ENCODE measurements at regions of chr20 and their contacts with region 1.

Region 1: DNA sequence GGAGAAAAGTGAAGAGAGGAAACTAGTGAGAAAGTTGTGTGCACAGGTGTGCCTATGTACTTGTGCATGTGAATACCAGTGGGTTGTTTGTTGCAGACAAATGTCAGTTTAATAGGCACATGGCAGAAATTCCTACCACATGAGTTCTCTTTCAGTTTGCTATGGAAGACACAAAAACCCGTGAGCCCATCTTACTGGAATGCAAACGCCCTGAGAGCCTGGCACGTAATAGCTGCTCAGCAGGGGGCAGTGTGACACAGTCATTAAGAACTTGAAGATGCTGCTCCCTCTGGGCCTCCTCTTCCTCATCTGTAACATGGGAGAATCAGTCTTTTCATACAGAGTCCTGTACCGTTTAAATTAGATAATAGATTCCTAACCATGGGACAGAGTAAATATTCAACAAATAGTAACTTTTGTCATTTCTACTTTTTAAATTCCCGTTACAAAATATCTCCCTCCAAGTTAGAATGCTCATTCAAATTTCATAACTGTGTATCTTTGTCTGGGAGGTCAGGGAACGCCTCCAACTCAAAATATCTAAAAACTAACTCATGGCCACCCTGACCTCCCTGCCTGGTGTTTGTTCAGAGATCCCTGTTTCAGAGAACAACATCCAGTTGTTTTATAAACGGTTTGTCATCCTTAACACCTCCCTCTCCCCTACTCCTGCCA is 802.9 kb downstream of the MAFB start:
- DNase-seq: peak; percentile 68 to 80
- ATAC-seq: peak; percentile 79 to 92 (median 88)
- H3K4me3 ChIP-seq: no peak overlapping the region
- H3K27ac ChIP-seq: no peak overlapping the region
- H3K4me1 ChIP-seq: no peaks in the 10 kb centered on the region
- H3K27me3 ChIP-seq: no peaks in the 10 kb centered on the region
- CTCF ChIP-seq: peak; percentile 71

Region 2: DNA sequence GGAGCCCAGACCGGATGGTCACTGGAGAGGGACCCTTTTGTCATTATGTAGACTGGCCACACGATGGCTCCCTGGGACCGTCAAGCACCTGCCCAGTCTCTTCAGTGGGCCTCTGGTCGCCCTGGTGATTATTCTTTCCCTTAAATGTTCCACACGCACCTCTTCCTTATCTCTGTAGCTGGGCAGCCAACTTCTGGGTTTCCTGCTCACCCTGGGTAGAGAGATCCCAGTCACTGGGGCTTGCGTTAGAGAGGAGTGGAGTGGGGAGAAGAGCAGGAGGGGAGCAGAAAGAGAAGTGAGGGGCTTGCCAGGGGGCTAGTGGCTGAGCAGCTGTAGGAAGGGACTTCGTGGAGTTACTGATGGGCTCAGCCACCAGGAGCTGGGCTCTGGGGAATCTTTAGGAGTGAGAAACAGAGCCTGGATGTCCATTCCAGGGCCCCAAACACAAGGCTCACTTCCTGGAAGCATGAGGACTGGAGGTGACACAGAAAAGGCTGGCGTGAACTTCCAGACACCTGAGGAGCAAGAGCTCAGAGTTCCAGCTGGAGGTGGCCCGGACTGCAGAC is 773.9 kb before region 1 on chr20:
- intact Hi-C with region 1: loop called in 1 of 2 experiments (anchors 10 kb)
- DNase-seq: peak in 1 of 2 donors; percentile 30
- ATAC-seq: peak; percentile 76 to 93 (median 92)
- H3K4me3 ChIP-seq: no peak overlapping the region
- H3K27ac ChIP-seq: no peak overlapping the region
- H3K4me1 ChIP-seq: no peaks in the 10 kb centered on the region
- H3K27me3 ChIP-seq: peaks cover 0 to 19% (median 3%) of the 10 kb centered on the region in 3 donors
- CTCF ChIP-seq: peak; percentile 72

Region 3: DNA sequence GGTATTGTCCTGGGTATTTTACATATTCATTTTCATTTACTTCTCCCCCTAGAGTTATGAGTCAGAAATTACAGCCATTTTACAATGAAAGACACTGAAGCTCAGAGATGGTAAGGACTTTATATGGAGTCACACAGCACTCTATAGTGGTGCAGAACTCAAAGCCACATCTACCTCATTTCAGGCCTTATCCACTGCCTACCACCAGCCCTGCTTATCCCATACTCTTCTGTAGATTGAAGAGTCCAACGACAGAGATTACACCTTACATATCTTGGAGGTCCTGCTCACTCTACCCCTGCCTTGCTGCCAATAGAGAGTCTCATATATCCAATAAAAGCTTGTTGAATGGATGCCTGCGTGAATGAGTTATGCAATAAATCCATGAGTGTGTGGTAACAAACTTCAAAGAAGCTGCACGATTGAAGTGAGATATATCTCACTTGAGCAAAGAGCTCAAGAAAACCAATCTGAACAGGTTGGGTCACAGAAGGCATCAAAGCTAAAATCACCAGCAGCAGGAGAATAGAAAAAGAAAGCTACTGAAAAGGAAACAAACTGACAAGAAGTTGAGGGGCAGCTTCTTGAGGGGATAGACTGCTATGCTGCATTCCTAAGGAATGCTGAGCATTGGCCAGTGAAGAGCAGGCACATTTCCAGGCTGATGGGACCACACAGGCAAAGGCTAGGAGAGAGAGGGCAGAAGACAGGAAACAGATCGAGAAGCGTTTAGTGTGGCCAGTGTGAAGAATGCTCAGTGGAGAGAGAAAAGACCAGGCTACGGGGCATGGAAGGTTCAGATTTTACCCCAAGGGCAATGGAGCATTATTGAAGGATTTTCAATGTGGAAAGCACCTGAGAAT is 338.3 kb before region 1 on chr20:
- intact Hi-C with region 1: no loop called
- DNase-seq: no peak
- ATAC-seq: no peak
- H3K4me3 ChIP-seq: no peak overlapping the region
- H3K27ac ChIP-seq: no peak overlapping the region
- H3K4me1 ChIP-seq: no peaks in the 10 kb centered on the region
- H3K27me3 ChIP-seq: no peaks in the 10 kb centered on the region
- CTCF ChIP-seq: no peak

Region 4: DNA sequence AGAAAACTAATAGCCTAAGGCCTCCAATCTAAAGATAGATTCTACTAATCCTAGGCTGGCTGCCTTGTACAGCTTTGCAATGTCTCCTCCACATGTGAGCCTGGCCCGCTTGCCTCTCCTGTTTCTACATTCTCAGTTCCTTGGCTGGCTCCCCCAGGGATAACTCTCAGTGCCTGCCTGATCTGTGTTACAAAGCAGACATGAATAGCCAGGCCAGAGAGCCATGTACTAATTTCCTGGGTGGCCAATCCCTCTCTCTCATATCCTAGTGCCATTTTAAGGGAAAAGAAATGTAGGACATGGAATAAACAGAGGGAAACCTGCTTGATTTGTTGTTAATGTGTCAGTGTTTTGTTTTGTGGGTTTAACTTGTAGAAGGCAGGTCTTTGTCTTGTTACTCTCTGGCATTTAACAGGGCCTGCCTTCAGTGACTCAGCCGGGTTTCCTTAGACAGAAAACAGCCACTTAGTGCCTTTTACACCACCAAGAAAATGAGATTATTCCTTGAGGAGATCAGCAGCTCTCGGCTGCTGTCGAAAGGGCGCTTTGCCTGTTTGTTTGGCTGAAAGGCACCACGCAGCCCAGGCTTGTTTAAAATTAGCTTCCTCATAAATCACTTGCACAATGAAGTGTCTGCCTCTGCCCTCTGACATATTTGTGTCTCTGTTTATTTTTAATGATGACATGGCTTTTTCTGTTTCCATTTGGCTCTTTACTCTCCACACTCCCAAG is 100.2 kb after region 1 on chr20:
- intact Hi-C with region 1: loop called in 1 of 2 experiments (anchors 10 kb)
- DNase-seq: peak; percentile 78 to 90
- ATAC-seq: peak; percentile 97 to 98 (median 98)
- H3K4me3 ChIP-seq: peak overlapping the region; percentile 44
- H3K27ac ChIP-seq: peak overlapping the region; percentile 98
- H3K4me1 ChIP-seq: peaks cover 41% of the 10 kb centered on the region
- H3K27me3 ChIP-seq: no peaks in the 10 kb centered on the region
- CTCF ChIP-seq: no peak

Region 5: GRCh38 chr20:40251284-40251932 is 365.3 kb after region 1 on chr20:
- intact Hi-C with region 1: loop called in 1 of 2 experiments (anchors 5 kb)
- DNase-seq: no peak
- ATAC-seq: peak in 2 of 4 donors; percentile 28 to 57
- H3K4me3 ChIP-seq: no peak overlapping the region
- H3K27ac ChIP-seq: no peak overlapping the region
- H3K4me1 ChIP-seq: no peaks in the 10 kb centered on the region
- H3K27me3 ChIP-seq: no peaks in the 10 kb centered on the region
- CTCF ChIP-seq: peak; percentile 40